ENCODE measurements at regions of chr5 and their contacts with region 1.

Region 1: GRCh38 chr5:176647030-176647866 is at the start of gene TSPAN17:
- DNase-seq: peak; percentile 100
- H3K4me3 Mint-ChIP-seq: peak within 1 kb of the TSS; percentile 86
- H3K27ac Mint-ChIP-seq: peak within 1 kb of the TSS; percentile 86
- H3K4me1 Mint-ChIP-seq: peaks cover 44% of the 10 kb centered on the region
- H3K27me3 Mint-ChIP-seq: no peaks in the 10 kb centered on the region
- total RNA-seq, gene TSPAN17: 17.2 to 17.4 TPM

Region 2: DNA sequence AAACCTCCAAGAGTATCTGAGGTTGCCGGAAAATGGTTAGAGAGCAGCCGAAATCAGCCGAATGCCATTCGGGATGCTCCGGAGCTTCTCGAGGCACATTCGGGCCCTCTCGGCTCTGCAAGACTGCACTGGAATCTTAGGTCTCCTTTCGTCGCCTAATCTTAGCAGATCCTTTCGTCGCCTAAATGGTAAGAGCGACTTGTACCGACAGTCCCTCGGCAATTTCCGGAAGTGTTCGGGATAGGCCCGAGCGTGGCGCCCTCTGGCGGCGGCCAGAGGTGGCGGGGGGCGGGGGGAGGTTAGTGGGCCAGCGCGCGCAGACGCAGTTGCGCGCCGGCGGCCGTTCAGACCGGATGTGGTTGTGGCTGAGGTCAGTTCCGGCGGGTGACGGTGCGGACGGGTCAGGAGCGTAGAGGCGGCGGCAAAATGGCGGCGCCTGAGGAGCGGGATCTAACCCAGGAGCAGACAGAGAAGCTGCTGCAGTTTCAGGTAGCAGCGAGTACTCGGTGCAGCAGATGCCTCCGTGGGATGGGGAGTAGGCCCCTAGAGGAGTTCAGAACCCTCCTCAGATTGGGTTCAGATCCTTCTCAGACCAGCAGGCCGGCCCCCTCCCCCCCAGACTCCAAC is 199.2 kb before region 1 on chr5 and contains the start of gene FAF2:
- CTCF ChIA-PET with region 1: no interaction called
- intact Hi-C with region 1: loop called (anchors 1 kb)
- DNase-seq: peak; percentile 98
- H3K4me3 Mint-ChIP-seq: peak within 1 kb of the TSS; percentile 99
- H3K27ac Mint-ChIP-seq: peak within 1 kb of the TSS; percentile 97
- H3K4me1 Mint-ChIP-seq: peaks cover 37% of the 10 kb centered on the region
- H3K27me3 Mint-ChIP-seq: no peaks in the 10 kb centered on the region
- total RNA-seq, gene FAF2: 30.0 to 32.8 TPM

Region 3: DNA sequence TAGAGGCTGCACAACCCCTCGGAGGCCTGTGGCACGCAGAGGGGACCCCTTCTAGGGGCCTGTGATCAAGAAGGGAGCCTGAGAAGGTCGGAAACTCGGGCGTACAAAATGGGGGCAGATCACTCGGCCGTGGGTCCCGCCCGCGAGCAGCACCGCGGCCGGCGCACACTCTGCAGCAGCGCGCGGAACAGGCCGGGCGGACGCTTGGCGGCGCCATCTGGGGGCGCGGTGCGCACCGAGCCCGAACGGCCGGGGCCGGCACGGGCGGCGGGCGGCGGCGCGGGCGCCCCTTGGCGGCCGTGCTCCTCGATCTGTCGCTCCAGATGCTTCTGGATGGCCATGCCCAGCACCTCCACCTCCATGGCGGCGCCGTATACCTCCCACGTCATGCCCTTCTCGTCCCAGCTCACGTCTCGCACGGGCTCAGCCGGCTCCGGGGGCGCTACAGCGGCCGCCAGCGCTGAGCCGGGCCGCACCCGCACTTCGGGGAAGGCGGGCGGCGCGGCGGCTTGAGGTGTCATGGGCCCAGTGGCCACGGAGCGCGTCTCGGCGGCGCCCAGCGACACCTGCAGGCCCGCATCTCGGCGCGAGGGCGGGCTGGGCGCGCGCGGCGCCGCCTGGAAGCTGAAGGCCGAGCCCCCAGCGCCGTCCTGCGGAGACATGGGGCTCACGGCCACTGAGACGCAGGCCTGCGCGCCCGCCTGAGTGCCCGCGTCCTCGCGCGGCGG is 50.4 kb before region 1 on chr5:
- CTCF ChIA-PET with region 1: no interaction called
- intact Hi-C with region 1: loop called (anchors 1 kb)
- DNase-seq: peak; percentile 70
- H3K4me3 Mint-ChIP-seq: peak overlapping the region; percentile 59
- H3K27ac Mint-ChIP-seq: no peak overlapping the region
- H3K4me1 Mint-ChIP-seq: peaks cover 9% of the 10 kb centered on the region
- H3K27me3 Mint-ChIP-seq: no peaks in the 10 kb centered on the region

Region 4: GRCh38 chr5:177022384-177023308 is 375.4 kb after region 1 on chr5 and contains the start of gene ZNF346:
- CTCF ChIA-PET with region 1: no interaction called
- intact Hi-C with region 1: loop called (anchors 2 kb)
- DNase-seq: peak; percentile 95
- H3K4me3 Mint-ChIP-seq: peak within 1 kb of the TSS; percentile 99
- H3K27ac Mint-ChIP-seq: peak within 1 kb of the TSS; percentile 91
- H3K4me1 Mint-ChIP-seq: peaks cover 39% of the 10 kb centered on the region
- H3K27me3 Mint-ChIP-seq: no peaks in the 10 kb centered on the region
- total RNA-seq, gene ZNF346: 13.4 to 15.1 TPM